Ovary (tissue), 10 donors: ENCODE measurements at regions of chr1 and their contacts with region 1.

Region 1: DNA sequence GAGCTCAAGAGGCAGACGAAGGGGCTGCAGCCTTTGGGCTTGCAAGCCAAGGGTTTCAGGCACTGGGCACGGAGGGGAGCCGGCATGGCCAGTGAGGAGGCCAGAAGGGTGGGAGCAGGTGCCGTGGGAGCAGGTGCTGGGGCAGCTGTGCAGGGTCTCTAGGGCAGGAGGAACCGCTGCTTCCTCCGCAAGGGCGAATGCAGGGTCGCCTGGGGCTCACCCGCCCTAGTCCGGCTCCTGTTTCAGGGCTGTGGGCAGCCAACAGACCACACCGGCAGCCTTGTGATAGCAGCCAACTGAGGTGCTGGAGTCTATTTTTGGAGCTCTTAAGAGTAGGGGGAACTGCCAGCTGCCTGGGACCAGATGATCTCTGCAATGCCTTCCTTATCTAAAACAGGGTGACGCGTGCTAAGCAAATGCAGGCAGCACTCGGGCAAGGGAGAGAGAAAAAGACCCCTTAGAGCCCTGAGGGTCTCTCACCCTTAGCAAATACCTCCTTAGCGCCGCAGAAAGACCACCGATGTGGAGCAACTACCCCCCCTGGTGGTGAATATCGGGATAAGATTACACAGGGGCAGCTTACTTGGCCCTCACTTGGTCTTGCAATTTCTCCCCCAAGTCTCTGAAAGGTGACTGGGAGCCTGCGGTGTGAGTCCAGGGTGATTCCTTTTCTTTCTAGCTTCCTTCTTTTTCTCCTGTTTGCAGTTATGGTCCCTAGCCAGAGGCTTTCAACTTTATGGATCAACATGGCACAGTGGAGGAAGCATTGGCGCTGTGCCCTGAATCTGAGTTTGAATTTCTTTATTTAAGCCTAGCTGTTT is 20.7 kb upstream of the MAPKAPK2 start:
- DNase-seq: peak; percentile 55 to 78 (median 65)
- H3K4me3 ChIP-seq: no peak overlapping the region
- H3K27ac ChIP-seq: no peak overlapping the region
- H3K4me1 ChIP-seq: peaks cover 5% of the 10 kb centered on the region
- H3K27me3 ChIP-seq: no peaks in the 10 kb centered on the region
- CTCF ChIP-seq: peak; percentile 66 to 85 (median 81)
- EP300 ChIP-seq: no peak
- POLR2A ChIP-seq: no peak

Region 2: GRCh38 chr1:206415942-206416341 is 248.1 kb before region 1 on chr1:
- intact Hi-C with region 1: no loop called
- DNase-seq: no peak
- H3K4me3 ChIP-seq: no peak overlapping the region
- H3K27ac ChIP-seq: no peak overlapping the region
- H3K4me1 ChIP-seq: no peaks in the 10 kb centered on the region
- H3K27me3 ChIP-seq: no peaks in the 10 kb centered on the region
- CTCF ChIP-seq: no peak
- EP300 ChIP-seq: no peak
- POLR2A ChIP-seq: no peak

Region 3: DNA sequence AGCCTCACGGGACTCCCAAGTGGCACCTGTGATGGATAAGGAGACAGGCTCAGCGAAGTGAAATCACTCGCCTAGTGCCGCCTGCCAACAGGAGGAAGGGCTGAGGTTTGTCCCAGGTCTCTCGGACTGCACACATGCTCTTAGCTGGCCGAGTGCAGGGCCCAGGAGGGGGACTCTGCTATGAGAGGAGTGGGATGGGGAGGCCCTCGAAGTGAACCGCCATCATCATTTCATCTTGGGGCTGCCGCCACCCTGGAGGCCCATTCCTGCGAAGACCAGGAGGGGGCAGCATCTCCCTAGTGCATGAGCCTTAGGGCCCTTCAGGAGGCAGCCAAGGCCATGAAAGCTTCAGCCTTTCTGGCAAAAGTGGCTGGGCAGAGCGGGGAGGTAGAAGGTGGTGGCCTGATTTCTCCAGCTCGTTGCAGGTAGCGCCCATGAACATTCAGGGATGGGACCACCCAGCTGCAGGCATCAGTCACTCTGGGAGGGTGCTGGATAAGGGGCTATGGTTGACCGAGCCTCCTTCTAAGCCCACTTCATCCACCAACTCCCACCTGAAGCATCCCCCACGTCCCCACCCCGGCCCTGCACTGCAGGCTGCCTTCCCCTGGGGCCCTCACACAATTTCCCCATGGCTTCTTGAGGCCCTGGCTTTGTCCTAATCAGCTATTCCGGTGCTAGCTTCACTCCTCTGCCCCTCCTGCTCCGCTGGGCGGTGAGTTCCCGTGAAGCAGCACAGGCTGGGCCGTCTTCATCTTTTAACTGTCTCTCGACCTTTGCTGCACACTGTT is 173.9 kb before region 1 on chr1:
- intact Hi-C with region 1: loop called in 3 of 4 experiments (anchors 5 to 10 kb)
- DNase-seq: peak; percentile 70 to 85 (median 84)
- H3K4me3 ChIP-seq: no peak overlapping the region
- H3K27ac ChIP-seq: no peak overlapping the region
- H3K4me1 ChIP-seq: no peaks in the 10 kb centered on the region
- H3K27me3 ChIP-seq: no peaks in the 10 kb centered on the region
- CTCF ChIP-seq: peak; percentile 81 to 93 (median 88)
- EP300 ChIP-seq: no peak
- POLR2A ChIP-seq: no peak